ENCODE measurements at regions of chr15 and their contacts with region 1.

Region 1: DNA sequence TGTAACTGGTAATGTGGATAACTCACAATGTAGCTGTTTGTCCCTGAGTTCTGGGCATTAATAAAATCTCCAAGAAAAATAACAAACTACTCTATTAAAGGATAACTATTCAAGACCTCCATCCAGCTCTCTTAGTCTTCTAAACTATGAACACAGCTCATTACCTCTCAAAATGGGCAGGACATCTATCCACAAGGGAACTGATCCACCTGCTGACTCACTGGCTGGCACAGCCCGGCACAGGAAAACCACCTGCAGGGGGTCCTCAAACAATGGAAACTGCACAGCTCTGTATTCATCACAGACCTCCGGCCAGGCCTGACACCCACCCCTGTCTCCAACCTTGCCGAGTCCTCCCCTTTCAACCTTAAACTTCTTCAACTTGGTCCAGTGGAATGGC is 255.4 kb downstream of the TJP1 start:
- DNase-seq: no peak
- H3K4me3 ChIP-seq: no peak overlapping the region
- H3K27ac ChIP-seq: no peak overlapping the region
- H3K4me1 ChIP-seq: no peaks in the 10 kb centered on the region
- H3K27me3 ChIP-seq: peaks cover 56% of the 10 kb centered on the region
- CTCF ChIP-seq: no peak

Region 2: GRCh38 chr15:28984421-28985315 is 582.2 kb before region 1 on chr15:
- CTCF ChIA-PET with region 1: interaction called, 11 read pairs
- POLR2A ChIA-PET with region 1: no interaction called
- intact Hi-C with region 1: no loop called
- DNase-seq: peak; percentile 6
- H3K4me3 ChIP-seq: no peak overlapping the region
- H3K27ac ChIP-seq: no peak overlapping the region
- H3K4me1 ChIP-seq: no peaks in the 10 kb centered on the region
- H3K27me3 ChIP-seq: no peaks in the 10 kb centered on the region
- CTCF ChIP-seq: no peak

Region 3: DNA sequence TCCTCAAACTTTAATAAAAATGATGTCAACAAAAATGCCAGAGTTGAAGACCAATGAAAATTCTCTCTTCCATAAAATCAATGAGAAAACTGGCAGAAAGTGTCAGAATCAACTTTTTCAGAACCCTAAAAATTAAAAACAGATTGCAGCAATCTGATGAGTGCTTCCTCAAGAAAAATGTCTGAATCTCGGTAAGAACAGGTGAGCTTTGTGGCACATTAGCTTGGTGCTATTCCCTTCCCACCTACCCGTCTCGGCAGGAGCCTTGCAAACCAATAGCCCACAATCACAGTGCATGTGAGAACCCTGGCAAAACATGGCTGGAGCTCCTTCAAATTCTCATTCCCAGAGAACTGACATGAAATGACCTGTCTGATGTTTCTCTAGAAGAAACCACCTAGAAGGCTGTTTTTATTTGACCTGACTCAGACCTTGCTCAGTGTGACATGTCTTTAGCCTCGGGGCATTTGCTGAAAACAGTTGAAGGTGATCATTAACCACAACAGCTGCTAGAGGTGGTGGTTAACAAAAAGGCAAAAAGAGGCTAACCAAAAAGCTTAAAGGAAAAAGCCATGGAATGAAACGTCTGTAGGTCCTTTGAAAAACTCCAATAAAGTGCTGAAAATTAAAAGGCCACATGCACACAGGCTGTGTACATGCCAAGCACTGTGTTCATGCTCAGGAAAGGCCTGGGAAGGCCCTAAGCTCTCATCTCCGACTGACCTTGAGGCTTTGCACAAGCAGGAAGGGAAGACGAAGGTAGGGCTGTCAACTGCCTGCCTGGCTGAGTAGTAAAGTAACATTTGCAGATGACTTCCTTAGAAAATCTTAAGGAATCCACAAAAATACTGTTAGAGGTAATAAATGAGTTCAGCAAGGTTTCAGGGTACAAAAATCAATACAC is 44.3 kb before region 1 on chr15:
- CTCF ChIA-PET with region 1: no interaction called
- POLR2A ChIA-PET with region 1: no interaction called
- intact Hi-C with region 1: no loop called
- DNase-seq: no peak
- H3K4me3 ChIP-seq: no peak overlapping the region
- H3K27ac ChIP-seq: no peak overlapping the region
- H3K4me1 ChIP-seq: no peaks in the 10 kb centered on the region
- H3K27me3 ChIP-seq: no peaks in the 10 kb centered on the region
- CTCF ChIP-seq: no peak

Measured in A673 (cell line).